Activated CD4-positive, alpha-beta T cell treated with anti-CD3 and anti-CD28 coated beads, Interleukin-2, amount 10 ng/mL, durations not matched to agents 24 days and 14 days (primary cell): ENCODE measurements at regions of chr11 and their contacts with region 1.

Region 1: DNA sequence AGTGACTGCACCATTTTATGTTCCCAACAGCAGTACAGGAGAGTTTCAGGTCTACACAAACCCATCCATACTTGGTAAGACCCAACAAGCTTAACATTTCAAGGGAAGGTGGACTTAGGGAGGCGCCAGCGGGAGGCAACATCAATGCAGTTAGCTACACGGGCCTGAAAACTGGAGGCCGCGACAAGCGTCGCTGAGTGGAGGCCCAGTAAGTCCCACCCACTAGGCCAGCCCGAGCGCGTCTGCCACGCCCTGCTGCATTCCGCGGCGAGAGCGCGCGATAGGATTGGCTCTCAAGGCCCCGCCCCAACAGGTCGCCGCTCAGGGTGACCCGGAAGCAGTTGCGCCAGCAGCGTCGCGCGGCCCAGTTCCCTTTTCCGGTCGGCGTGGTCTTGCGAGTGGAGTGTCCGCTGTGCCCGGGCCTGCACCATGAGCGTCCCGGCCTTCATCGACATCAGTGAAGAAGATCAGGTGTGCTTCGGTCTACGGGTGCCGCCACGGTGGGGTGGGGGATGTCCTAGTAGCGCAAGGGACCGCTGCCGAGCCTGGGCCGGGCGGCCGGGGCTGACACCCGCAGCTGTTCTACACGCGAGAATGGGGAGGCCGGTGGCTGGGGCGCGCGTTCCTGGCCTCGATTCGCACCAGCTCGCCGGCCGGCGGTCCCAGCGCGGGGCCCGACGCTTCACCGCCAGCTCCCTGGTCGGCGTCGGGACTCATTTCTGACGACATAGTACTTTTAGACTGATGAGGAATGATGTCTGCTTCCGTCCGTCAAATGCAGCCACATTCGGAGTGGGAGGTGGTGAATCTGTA is at the start of gene EIF3M:
- DNase-seq: peak; percentile 99
- H3K4me3 Mint-ChIP-seq: peak within 1 kb of the TSS; percentile 98
- H3K27ac Mint-ChIP-seq: peak within 1 kb of the TSS; percentile 98
- H3K4me1 Mint-ChIP-seq: peaks cover 25% of the 10 kb centered on the region
- H3K27me3 Mint-ChIP-seq: no peaks in the 10 kb centered on the region
- total RNA-seq, gene EIF3M: 348 and 351 TPM in 2 replicates

Region 2: DNA sequence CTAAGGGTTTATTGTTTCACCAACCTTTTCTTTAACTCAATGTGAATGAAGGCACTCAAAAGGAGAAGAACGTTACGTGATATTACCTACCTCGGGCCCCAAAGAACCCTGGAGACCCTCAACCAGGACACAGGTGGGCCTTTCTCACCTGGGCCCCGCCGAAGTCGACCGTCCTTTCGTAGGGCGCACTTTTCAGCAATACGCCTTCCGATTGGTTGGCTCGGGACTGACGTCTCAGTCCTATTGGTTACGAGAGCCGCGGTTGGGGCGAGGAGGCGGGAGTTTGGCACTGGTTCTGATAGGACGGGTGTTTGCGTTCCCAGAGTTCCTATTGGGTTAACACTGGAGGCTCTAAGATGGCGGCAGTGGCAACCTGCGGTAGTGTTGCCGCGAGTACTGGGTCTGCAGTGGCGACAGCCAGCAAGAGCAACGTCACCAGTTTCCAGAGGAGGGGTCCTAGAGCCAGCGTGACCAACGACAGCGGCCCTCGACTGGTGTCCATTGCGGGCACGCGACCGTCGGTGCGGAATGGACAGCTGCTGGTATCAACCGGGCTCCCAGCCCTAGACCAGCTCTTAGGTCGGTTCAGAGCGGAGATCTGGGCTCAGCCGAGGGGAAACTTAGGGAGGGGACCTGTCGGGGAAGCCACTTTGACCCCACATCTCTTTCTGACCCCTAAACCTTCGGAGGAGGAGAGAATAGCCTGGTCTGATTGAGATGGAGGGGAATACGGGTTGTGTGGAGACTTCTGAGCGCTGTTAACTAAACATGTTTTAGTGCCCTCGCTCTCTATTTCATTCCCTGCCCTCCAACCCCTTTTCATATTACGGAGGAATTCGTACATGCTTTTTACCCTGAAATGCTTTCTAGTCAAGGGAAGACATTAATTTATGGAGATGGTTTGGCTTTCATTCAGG is 1074.0 kb before region 1 on chr11 and contains the starts of genes ELP4 and IMMP1L:
- intact Hi-C with region 1: loop called (anchors 10 kb)
- DNase-seq: peak; percentile 99
- H3K4me3 Mint-ChIP-seq: peak within 1 kb of the TSS; percentile 96
- H3K27ac Mint-ChIP-seq: peak within 1 kb of the TSS; percentile 91
- H3K4me1 Mint-ChIP-seq: peaks cover 25% of the 10 kb centered on the region
- H3K27me3 Mint-ChIP-seq: no peaks in the 10 kb centered on the region
- total RNA-seq, gene ELP4: 17.4 and 20.6 TPM in 2 replicates
- total RNA-seq, gene IMMP1L: 24.0 and 27.2 TPM in 2 replicates

Region 3: GRCh38 chr11:32090545-32091373 is 492.9 kb before region 1 on chr11 and contains the start of gene RCN1:
- intact Hi-C with region 1: loop called (anchors 10 kb)
- DNase-seq: peak; percentile 84
- H3K4me3 Mint-ChIP-seq: peak within 1 kb of the TSS; percentile 85
- H3K27ac Mint-ChIP-seq: peak within 1 kb of the TSS; percentile 92
- H3K4me1 Mint-ChIP-seq: peaks cover 35% of the 10 kb centered on the region
- H3K27me3 Mint-ChIP-seq: peaks cover 13% of the 10 kb centered on the region
- total RNA-seq, gene RCN1: 30.5 and 30.6 TPM in 2 replicates

Region 4: GRCh38 chr11:32792948-32793475 is 209.3 kb after region 1 on chr11:
- intact Hi-C with region 1: loop called (anchors 10 kb)
- DNase-seq: peak; percentile 88
- H3K4me3 Mint-ChIP-seq: peak overlapping the region; percentile 60
- H3K27ac Mint-ChIP-seq: no peak overlapping the region
- H3K4me1 Mint-ChIP-seq: peaks cover 4% of the 10 kb centered on the region
- H3K27me3 Mint-ChIP-seq: peaks cover 21% of the 10 kb centered on the region

Region 5: DNA sequence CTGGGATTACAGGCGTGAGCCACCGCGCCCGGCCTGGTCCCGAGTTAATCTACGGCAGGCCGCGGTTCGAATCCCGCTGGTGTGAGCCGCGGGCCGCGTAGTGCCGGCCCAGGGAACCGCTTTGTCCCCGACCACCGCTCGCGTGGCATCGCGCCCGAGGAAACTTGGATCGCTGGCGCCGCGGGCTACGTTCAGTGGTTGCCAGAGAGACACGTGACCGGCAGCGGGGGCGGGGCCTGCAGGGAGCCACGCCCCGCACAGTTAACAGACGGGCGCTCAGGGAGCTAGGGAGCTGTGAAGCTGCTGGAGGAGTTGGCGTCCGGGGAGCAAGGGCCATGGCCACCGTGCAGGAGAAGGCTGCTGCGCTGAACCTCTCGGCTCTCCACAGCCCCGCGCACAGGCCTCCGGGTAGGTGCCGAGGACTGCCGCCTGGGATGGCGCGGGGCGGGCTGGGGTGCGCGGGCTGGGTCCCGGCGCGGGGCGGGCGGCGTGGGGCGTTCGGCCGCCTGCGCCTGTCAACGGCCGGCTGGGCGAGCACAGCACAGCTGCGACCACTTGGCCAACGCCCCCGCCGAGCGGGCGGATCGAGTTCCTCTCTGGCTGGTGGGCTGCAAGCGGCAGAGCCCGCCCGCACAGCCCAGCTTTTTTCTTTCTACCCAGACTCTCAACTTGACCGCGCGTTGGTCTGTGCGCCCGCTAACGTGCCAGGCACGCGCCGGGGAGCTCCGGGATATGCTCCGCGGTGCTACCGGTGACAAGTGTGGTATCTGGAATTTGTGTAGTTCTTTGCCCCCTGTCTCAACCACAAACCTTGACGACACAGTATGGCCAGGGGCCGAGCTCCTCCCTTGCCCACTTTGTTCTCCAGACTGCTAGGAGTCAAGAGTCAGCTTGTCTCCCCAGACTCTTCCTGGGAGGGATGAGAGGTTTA is 432.2 kb after region 1 on chr11 and contains the start of gene DEPDC7:
- intact Hi-C with region 1: loop called (anchors 10 kb)
- DNase-seq: peak; percentile 93
- H3K4me3 Mint-ChIP-seq: peak within 1 kb of the TSS; percentile 84
- H3K27ac Mint-ChIP-seq: no peak within 1 kb of the TSS
- H3K4me1 Mint-ChIP-seq: peaks cover 16% of the 10 kb centered on the region
- H3K27me3 Mint-ChIP-seq: peaks cover 61% of the 10 kb centered on the region
- total RNA-seq, gene DEPDC7: 0.64 and 0.84 TPM in 2 replicates

Region 6: GRCh38 chr11:33039274-33040032 is 455.8 kb after region 1 on chr11 and contains the start of gene TCP11L1:
- intact Hi-C with region 1: loop called (anchors 1 kb)
- DNase-seq: peak; percentile 94
- H3K4me3 Mint-ChIP-seq: peak within 1 kb of the TSS; percentile 93
- H3K27ac Mint-ChIP-seq: peak within 1 kb of the TSS; percentile 93
- H3K4me1 Mint-ChIP-seq: peaks cover 21% of the 10 kb centered on the region
- H3K27me3 Mint-ChIP-seq: peaks cover 12% of the 10 kb centered on the region
- total RNA-seq, gene TCP11L1: 12.5 and 14.4 TPM in 2 replicates